Activated naive CD8-positive, alpha-beta T cell treated with anti-CD3 and anti-CD28 coated beads, Interleukin-2, amount 10 ng/mL, durations not matched to agents 7 days and 5 days (primary cell): ENCODE measurements at regions of chr1 and their contacts with region 1.

Region 1: DNA sequence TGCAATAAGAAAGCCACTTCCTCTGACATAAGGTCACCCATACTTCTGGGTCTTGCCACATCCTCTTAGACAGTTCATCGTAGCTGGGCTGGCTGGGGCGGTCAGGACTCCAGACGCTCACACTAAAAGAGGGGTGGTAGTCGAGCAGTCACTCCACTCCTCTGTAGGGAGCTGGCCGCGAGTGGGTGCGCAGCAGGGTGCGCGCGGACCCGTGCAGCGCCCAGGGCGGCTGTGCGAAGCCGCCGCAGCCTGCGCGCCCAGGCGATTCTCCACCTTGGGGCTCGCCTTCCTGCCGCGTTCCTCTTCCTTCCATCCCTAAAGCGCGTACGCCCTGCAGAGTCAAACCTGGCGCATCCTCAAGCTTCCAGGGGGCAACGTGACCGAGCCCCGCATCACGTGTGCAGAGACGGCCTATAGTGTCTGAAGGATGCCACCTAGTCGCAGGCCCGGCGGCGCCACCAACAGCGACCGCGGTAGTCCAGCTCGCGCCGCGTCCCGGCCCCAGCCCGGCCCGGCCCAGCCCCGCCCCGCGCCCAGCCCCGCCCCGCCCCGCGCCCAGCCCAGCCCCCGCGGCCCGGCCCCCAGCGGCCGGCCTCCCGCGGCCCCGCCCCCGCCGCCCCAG is 360 bp upstream of the PRDX6 start:
- DNase-seq: peak; percentile 80
- ATAC-seq: peak; percentile 82
- H3K4me3 Mint-ChIP-seq: peak overlapping the region; percentile 94
- H3K27ac Mint-ChIP-seq: peak overlapping the region; percentile 94
- H3K4me1 Mint-ChIP-seq: peaks cover 50% of the 10 kb centered on the region
- H3K27me3 Mint-ChIP-seq: no peaks in the 10 kb centered on the region

Region 2: GRCh38 chr1:173429471-173430402 is 47.0 kb before region 1 on chr1:
- POLR2A ChIA-PET with region 1: interaction called, 14 read pairs
- DNase-seq: peak; percentile 71
- ATAC-seq: peak; percentile 79
- H3K4me3 Mint-ChIP-seq: peak overlapping the region; percentile 56
- H3K27ac Mint-ChIP-seq: peak overlapping the region; percentile 82
- H3K4me1 Mint-ChIP-seq: peaks cover 22% of the 10 kb centered on the region
- H3K27me3 Mint-ChIP-seq: no peaks in the 10 kb centered on the region

Region 3: GRCh38 chr1:173532237-173532636 is 55.5 kb after region 1 on chr1:
- POLR2A ChIA-PET with region 1: no interaction called
- DNase-seq: no peak
- ATAC-seq: peak; percentile 65
- H3K4me3 Mint-ChIP-seq: peak overlapping the region; percentile 32
- H3K27ac Mint-ChIP-seq: peak overlapping the region; percentile 59
- H3K4me1 Mint-ChIP-seq: peaks cover 16% of the 10 kb centered on the region
- H3K27me3 Mint-ChIP-seq: no peaks in the 10 kb centered on the region

Region 4: GRCh38 chr1:173549813-173550212 is 73.0 kb after region 1 on chr1:
- POLR2A ChIA-PET with region 1: interaction called, 20 read pairs
- DNase-seq: no peak
- ATAC-seq: no peak
- H3K4me3 Mint-ChIP-seq: no peak overlapping the region
- H3K27ac Mint-ChIP-seq: peak overlapping the region; percentile 30
- H3K4me1 Mint-ChIP-seq: peaks cover 43% of the 10 kb centered on the region
- H3K27me3 Mint-ChIP-seq: peaks cover 2% of the 10 kb centered on the region

Region 5: DNA sequence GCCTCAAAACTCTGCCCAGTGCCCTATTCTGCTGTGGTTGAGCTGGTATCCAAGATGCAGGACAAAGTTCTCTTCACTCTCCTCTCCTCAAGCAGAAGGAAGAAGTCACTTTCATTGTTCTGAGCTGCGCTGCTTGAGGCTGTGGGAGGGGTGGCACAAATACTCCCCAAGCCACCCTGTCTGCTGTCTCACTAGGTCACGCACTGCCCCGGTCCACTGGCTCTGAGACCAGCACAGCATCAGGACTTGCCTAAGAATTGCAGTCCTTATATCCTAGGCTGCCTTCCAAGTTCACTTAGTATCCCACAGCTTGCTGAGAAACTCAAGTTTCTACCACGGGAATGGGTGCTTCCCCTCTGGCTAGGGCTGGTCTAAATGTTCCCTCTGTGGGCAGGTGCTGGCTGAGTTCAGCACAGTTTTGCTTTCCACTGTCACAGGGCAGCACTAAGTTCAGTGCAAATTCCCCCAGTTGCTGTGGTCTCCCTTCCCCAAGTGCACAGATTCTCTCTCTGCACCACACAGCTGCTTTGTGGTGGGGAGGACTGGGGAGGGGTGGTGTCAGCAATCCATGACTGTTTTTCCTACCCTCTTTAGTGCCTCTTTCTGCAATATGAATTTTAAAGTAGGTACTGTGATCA is 93.7 kb after region 1 on chr1:
- POLR2A ChIA-PET with region 1: no interaction called
- DNase-seq: no peak
- ATAC-seq: peak; percentile 42
- H3K4me3 Mint-ChIP-seq: no peak overlapping the region
- H3K27ac Mint-ChIP-seq: no peak overlapping the region
- H3K4me1 Mint-ChIP-seq: peaks cover 5% of the 10 kb centered on the region
- H3K27me3 Mint-ChIP-seq: peaks cover 10% of the 10 kb centered on the region

Region 6: GRCh38 chr1:173714759-173715537 is 238.2 kb after region 1 on chr1 and contains the start of gene KLHL20:
- POLR2A ChIA-PET with region 1: interaction called, 27 read pairs
- DNase-seq: peak; percentile 82
- ATAC-seq: peak; percentile 99
- H3K4me3 Mint-ChIP-seq: peak within 1 kb of the TSS; percentile 97
- H3K27ac Mint-ChIP-seq: peak within 1 kb of the TSS; percentile 98
- H3K4me1 Mint-ChIP-seq: peaks cover 16% of the 10 kb centered on the region
- H3K27me3 Mint-ChIP-seq: peaks cover 15% of the 10 kb centered on the region
- total RNA-seq, gene KLHL20: 27.7 to 28.0 TPM

Region 7: DNA sequence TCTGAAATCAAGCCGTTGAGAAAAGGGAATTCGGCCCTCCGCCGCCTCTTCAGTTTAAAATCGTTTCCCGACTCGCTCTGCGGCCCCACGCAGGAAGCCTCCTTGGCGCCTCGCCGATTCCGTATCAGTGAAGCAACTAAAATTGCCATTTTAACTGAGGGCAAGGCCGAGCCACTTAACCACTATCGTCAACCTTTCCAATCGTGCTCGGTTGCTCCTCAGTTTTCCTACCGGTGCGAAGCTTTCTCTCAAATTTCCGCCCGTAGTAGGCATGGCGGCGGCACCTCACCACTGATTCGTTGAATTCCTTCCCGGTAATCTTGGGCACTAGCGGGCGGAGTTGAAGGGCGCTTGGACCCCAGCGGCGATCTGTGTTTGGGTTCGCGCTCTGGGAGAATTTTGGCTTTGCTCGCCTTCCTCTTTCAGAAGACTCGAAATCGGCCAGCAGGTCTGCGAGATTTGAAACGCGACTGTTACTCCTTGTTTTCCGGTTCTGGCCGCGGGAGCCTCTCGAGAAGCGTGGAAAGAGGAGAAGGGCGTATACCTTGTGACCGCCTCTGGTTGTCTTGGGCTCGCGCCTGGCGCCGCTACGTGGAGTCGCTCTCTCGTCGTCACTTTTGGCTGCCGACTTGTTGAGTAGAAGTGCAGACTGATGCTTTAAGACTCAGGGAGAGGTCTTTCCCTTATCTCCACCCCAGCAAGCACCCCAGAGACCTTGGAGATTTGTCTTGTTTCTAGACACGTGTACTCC is 347.7 kb after region 1 on chr1 and contains the starts of genes CENPL and DARS2:
- POLR2A ChIA-PET with region 1: interaction called, 20 read pairs
- DNase-seq: peak; percentile 84
- ATAC-seq: peak; percentile 88
- H3K4me3 Mint-ChIP-seq: peak within 1 kb of the TSS; percentile 92
- H3K27ac Mint-ChIP-seq: peak within 1 kb of the TSS; percentile 95
- H3K4me1 Mint-ChIP-seq: peaks cover 39% of the 10 kb centered on the region
- H3K27me3 Mint-ChIP-seq: no peaks in the 10 kb centered on the region
- total RNA-seq, gene CENPL: 33.9 to 34.0 TPM
- total RNA-seq, gene DARS2: 21.6 to 22.5 TPM